ENCODE measurements at regions of chr5 and their contacts with region 1.

Region 1: DNA sequence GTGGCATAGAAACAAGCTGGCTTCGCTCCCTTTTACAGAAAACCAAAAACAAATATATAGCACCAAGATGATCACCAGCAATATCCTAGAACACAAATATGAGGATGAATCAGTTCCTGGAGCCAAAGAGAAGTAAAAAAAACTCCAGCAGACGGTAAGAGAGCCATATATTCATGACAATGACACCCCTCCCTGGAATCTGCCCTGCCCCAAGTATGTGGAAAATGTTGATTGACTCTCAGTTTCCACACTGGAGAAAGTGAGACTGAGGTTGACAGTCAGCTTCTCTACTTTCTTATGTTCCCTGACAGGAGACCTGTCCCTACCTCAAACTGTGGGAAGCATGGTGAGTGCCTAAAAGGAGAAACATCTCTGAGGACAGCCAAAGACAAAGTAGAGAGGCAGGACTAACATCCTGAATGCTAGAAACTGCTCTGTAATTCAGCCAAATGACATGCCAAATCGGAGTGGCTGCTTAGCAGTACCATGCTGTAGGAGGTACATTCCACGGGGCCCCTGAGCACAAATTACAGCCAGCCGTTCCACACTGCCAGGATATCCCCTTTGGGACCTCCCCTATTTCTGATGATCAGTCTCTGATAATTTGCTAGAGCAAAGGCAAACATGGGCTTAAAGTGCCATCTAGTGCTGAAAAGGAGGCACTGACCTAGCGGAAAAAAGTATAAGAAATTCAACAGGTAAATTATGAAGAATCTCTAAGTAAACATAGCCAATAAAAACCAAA is 424.0 kb upstream of the RGMB start:
- DNase-seq: peak; percentile 66
- H3K4me3 ChIP-seq: no peak overlapping the region
- H3K27ac ChIP-seq: peak overlapping the region; percentile 9
- H3K4me1 ChIP-seq: no peaks in the 10 kb centered on the region
- H3K27me3 ChIP-seq: no peaks in the 10 kb centered on the region
- CTCF ChIP-seq: peak; percentile 56 to 64

Region 2: DNA sequence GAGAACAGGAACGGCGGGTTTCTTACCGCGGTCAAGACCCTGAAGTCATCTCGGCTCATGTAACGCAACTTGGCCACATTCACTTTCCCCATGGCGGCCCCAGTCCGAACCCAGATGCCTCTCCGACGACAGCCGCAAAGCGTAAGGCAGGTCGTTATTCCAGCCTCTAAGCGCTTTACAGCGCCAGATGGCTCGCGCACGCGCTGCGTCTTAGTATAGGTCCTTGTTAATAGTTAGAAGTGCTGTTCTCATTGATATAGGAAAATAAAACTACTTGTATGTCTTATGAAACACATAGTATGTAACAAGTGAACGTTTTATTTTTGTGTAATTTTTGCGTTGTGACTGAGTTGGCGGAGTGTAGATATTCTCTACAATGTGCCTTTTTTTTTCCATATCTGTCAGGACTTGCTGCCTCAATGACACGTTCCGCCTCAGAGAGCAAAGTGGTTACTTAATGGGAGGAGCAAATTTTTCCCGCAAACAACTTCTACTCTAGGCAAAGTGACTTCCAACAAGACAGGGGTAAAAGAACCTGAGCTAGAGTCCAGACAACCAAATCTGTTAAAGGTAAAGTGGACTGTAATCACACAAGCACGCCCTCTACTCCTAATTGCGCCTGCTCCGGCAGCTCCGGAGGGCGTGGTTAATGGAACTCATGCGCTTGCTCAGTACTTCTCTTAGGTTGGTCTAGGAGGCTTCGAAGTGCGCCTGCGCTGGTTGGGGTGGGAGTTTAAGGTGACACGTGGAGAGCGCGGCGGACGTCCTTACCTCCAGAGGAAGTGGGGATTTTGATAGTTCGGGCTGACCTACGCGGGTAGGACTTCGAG is 1166.1 kb before region 1 on chr5 and contains the start of gene RIOK2:
- CTCF ChIA-PET with region 1: no interaction called
- dilution Hi-C with region 1: no loop called
- in situ Hi-C with region 1: no loop called
- intact Hi-C with region 1: loop called (anchors 2 kb)
- DNase-seq: peak; percentile 91
- H3K4me3 ChIP-seq: peak within 1 kb of the TSS; percentile 80 to 89 (median 80)
- H3K27ac ChIP-seq: peak within 1 kb of the TSS; percentile 97
- H3K4me1 ChIP-seq: peaks cover 10% of the 10 kb centered on the region
- H3K27me3 ChIP-seq: no peaks in the 10 kb centered on the region
- CTCF ChIP-seq: no peak
- total RNA-seq, gene RIOK2: 18.5 to 38.3 TPM

Region 3: GRCh38 chr5:97425511-97425910 is 923.9 kb before region 1 on chr5:
- CTCF ChIA-PET with region 1: no interaction called
- dilution Hi-C with region 1: no loop called
- in situ Hi-C with region 1: no loop called
- intact Hi-C with region 1: loop called (anchors 1 kb)
- DNase-seq: peak; percentile 2
- H3K4me3 ChIP-seq: no peak overlapping the region
- H3K27ac ChIP-seq: no peak overlapping the region
- H3K4me1 ChIP-seq: no peaks in the 10 kb centered on the region
- H3K27me3 ChIP-seq: no peaks in the 10 kb centered on the region
- CTCF ChIP-seq: peak; percentile 27 to 59

Region 4: DNA sequence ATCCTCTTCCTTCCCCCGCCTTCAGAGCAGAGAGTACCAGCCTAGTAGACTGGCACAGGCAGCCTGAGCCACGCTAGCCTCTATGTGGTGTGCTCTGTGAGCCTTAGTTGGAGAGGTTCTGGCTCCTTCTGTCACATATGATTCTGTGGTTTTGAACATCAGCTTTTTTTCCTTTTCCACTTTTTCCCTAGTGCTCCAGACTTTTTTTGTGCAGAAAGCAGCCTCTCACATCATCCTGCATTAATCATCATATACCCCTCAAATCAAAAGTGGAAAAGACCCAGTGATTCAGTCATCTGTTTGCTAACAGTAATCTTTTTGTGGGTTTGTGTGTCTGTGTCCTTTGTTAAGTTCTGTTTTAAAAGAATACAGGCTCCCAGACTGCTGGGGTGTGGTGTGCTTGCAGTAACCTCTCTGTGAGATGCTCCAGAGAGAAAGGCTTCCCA is 239.8 kb before region 1 on chr5:
- CTCF ChIA-PET with region 1: no interaction called
- dilution Hi-C with region 1: no loop called
- in situ Hi-C with region 1: no loop called
- intact Hi-C with region 1: loop called (anchors 10 kb)
- DNase-seq: peak; percentile 72
- H3K4me3 ChIP-seq: no peak overlapping the region
- H3K27ac ChIP-seq: peak overlapping the region; percentile 78
- H3K4me1 ChIP-seq: peaks cover 42% of the 10 kb centered on the region
- H3K27me3 ChIP-seq: no peaks in the 10 kb centered on the region
- CTCF ChIP-seq: no peak

Region 5: DNA sequence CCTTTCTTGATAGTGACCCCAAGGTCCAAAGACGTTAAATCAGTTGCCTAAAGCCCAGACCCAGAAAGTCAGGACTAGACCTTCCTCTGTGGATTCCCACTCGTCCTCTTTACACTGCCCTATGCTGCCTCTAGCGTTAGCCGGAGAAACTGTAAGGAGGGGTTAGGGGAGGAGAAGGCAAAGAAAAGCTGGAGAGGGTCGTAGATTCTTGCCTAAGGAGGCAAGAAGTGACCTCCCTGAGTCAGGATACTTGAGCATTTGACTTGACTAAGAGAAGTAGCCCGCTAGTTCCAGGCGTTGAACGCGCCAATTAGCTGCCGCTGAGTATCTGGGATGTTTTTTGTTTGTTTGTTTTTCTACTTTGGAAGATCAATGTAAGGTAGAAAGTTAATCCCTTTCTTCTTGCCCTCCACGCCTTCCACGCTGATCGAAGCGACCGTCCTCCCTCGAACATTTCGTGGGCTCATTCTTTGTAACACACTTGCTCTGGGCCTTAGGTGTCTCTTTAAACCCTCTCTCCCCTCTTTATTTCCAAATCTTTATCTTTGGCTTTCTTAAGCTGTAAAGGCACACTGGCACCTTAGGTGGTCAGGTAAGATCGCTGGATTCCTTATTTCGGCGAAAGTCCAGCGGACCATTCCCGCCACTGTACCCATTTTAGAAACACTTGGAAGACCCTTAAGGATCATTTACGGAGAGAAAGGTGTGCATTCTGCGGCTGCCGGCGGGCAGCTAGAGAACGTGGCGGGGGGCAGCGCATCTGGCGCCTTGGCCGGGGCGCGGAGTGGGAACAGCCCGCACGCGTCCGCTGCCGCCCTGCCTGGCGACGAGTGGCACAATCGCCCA is 419.0 kb after region 1 on chr5:
- CTCF ChIA-PET with region 1: interaction called, 7 read pairs
- dilution Hi-C with region 1: no loop called
- in situ Hi-C with region 1: no loop called
- intact Hi-C with region 1: loop called (anchors 1 kb)
- DNase-seq: no peak
- H3K4me3 ChIP-seq: peak overlapping the region; percentile 62 to 73 (median 65)
- H3K27ac ChIP-seq: no peak overlapping the region
- H3K4me1 ChIP-seq: peaks cover 30% of the 10 kb centered on the region
- H3K27me3 ChIP-seq: no peaks in the 10 kb centered on the region
- CTCF ChIP-seq: peak; percentile 94 to 97

Measured in mammary epithelial cell (primary cell).